ENCODE measurements at regions of chr15 and their contacts with region 1.

Region 1: DNA sequence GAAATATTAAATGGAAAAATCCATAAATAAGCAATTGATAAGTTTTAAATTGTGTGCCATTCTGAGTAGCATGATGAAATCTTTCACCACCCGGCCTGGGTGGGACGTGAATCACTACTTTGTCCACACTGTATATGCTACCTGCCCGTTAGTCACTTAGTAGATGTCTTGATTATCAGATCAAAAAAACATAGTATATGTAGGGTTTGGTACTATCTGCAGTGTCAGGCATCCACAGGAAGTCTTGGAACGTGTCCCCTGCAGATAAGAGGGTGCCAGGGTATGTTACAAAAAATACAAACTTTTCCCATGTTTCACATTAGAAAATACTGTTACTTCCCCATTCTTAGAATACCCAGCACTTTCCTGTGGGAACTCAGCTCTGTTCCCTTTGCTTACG is 35.2 kb downstream of the FAM81A start:
- DNase-seq: no peak
- ATAC-seq: no peak
- H3K4me3 ChIP-seq: no peak overlapping the region
- H3K27ac ChIP-seq: no peak overlapping the region
- H3K4me1 ChIP-seq: no peaks in the 10 kb centered on the region
- H3K27me3 ChIP-seq: no peaks in the 10 kb centered on the region
- CTCF ChIP-seq: no peak

Region 2: GRCh38 chr15:59388670-59389069 is 84.6 kb before region 1 on chr15:
- intact Hi-C with region 1: loop called in 2 of 10 experiments (anchors 10 kb)
- DNase-seq: no peak
- ATAC-seq: no peak
- H3K4me3 ChIP-seq: no peak overlapping the region
- H3K27ac ChIP-seq: no peak overlapping the region
- H3K4me1 ChIP-seq: peaks cover 0 to 6% (median 0%) of the 10 kb centered on the region in 9 donors
- H3K27me3 ChIP-seq: no peaks in the 10 kb centered on the region
- CTCF ChIP-seq: no peak

Region 3: GRCh38 chr15:59399465-59400102 is 73.6 kb before region 1 on chr15:
- intact Hi-C with region 1: loop called in 1 of 10 experiments (anchors 10 kb)
- DNase-seq: no peak
- ATAC-seq: peak in 3 of 8 donors; percentile 49 to 71 (median 59)
- H3K4me3 ChIP-seq: no peak overlapping the region
- H3K27ac ChIP-seq: no peak overlapping the region
- H3K4me1 ChIP-seq: peaks cover 0 to 40% (median 5%) of the 10 kb centered on the region in 9 donors
- H3K27me3 ChIP-seq: no peaks in the 10 kb centered on the region
- CTCF ChIP-seq: no peak

Region 4: GRCh38 chr15:59516655-59517461 is 43.6 kb after region 1 on chr15:
- intact Hi-C with region 1: no loop called
- DNase-seq: no peak
- ATAC-seq: no peak
- H3K4me3 ChIP-seq: no peak overlapping the region
- H3K27ac ChIP-seq: peak overlapping the region in 1 of 10 donors; percentile 44
- H3K4me1 ChIP-seq: peaks cover 0 to 21% (median 0%) of the 10 kb centered on the region in 9 donors
- H3K27me3 ChIP-seq: no peaks in the 10 kb centered on the region
- CTCF ChIP-seq: no peak